Caco-2 (cell line): ENCODE measurements at regions of chr17 and their contacts with region 1.

Region 1: DNA sequence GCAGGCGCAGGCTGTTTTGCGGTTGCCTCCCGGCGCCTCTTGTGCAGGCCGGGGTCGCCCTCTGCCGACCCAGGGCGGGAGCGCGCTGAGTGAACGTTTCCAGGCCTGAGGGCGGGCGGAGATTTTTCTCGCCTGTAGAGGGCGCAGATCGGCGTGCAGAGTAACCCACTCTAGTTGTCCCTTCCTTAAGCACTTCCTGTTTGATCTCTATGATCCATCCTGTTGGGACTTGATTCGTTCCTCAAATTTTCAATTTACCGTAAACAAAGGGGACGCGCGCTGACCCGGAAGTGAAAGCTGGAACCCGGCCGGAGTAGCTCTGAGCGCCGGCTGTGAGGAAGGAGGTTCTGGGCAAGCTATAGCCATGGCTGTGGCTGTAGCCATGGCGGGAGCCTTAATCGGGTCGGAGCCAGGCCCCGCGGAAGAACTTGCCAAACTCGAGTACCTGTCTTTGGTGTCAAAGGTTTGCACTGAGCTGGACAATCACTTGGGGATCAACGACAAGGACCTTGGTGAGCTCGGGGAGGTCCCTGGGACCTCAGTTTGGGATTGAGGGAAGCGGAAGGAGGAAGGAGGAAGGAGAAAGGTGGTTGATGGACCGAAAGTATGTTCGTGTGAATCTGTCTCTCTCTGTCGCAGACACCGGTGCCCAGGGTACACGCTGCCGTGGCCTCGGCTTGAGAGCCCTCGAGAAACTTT is at the start of gene DHX8:
- DNase-seq: peak; percentile 97 to 98
- H3K4me3 ChIP-seq: peak within 1 kb of the TSS; percentile 64
- H3K4me3 Mint-ChIP-seq: peak within 1 kb of the TSS; percentile 98
- H3K27ac Mint-ChIP-seq: peak within 1 kb of the TSS; percentile 99
- H3K4me1 ChIP-seq: peaks cover 29% of the 10 kb centered on the region
- H3K4me1 Mint-ChIP-seq: peaks cover 13% of the 10 kb centered on the region
- H3K27me3 ChIP-seq: no peaks in the 10 kb centered on the region
- H3K27me3 Mint-ChIP-seq: no peaks in the 10 kb centered on the region
- CTCF ChIP-seq: peak; percentile 100
- total RNA-seq, gene DHX8: 56.3 and 66.8 TPM in 2 replicates

Region 2: GRCh38 chr17:42953669-42954068 is 530.2 kb before region 1 on chr17:
- CTCF ChIA-PET with region 1: no interaction called
- POLR2A ChIA-PET with region 1: interaction called, 13 read pairs
- intact Hi-C with region 1: no loop called
- DNase-seq: no peak
- H3K4me3 ChIP-seq: no peak overlapping the region
- H3K4me3 Mint-ChIP-seq: no peak overlapping the region
- H3K27ac Mint-ChIP-seq: no peak overlapping the region
- H3K4me1 ChIP-seq: no peaks in the 10 kb centered on the region
- H3K4me1 Mint-ChIP-seq: no peaks in the 10 kb centered on the region
- H3K27me3 ChIP-seq: no peaks in the 10 kb centered on the region
- H3K27me3 Mint-ChIP-seq: no peaks in the 10 kb centered on the region
- CTCF ChIP-seq: no peak

Region 3: GRCh38 chr17:43155666-43156065 is 328.2 kb before region 1 on chr17:
- CTCF ChIA-PET with region 1: no interaction called
- POLR2A ChIA-PET with region 1: no interaction called
- intact Hi-C with region 1: no loop called
- DNase-seq: peak; percentile 55 to 61
- H3K4me3 ChIP-seq: no peak overlapping the region
- H3K4me3 Mint-ChIP-seq: no peak overlapping the region
- H3K27ac Mint-ChIP-seq: no peak overlapping the region
- H3K4me1 ChIP-seq: peaks cover 18% of the 10 kb centered on the region
- H3K4me1 Mint-ChIP-seq: peaks cover 8% of the 10 kb centered on the region
- H3K27me3 ChIP-seq: no peaks in the 10 kb centered on the region
- H3K27me3 Mint-ChIP-seq: no peaks in the 10 kb centered on the region
- CTCF ChIP-seq: no peak

Region 4: GRCh38 chr17:43367737-43368242 is 116.0 kb before region 1 on chr17:
- CTCF ChIA-PET with region 1: interaction called, 39 read pairs
- POLR2A ChIA-PET with region 1: interaction called, 58 read pairs
- intact Hi-C with region 1: loop called (anchors 1 kb)
- DNase-seq: peak; percentile 79 to 80
- H3K4me3 ChIP-seq: peak overlapping the region; percentile 15; the same call in 1 of the 2 replicates
- H3K4me3 Mint-ChIP-seq: peak overlapping the region; percentile 90
- H3K27ac Mint-ChIP-seq: peak overlapping the region; percentile 100
- H3K4me1 ChIP-seq: peaks cover 31% of the 10 kb centered on the region
- H3K4me1 Mint-ChIP-seq: peaks cover 43% of the 10 kb centered on the region
- H3K27me3 ChIP-seq: no peaks in the 10 kb centered on the region
- H3K27me3 Mint-ChIP-seq: peaks cover 4% of the 10 kb centered on the region
- CTCF ChIP-seq: no peak

Region 5: GRCh38 chr17:43393944-43394482 is 89.8 kb before region 1 on chr17:
- CTCF ChIA-PET with region 1: interaction called, 211 read pairs
- POLR2A ChIA-PET with region 1: interaction called, 34 read pairs
- intact Hi-C with region 1: loop called (anchors 1 kb)
- DNase-seq: peak; percentile 87 to 91
- H3K4me3 ChIP-seq: no peak overlapping the region
- H3K4me3 Mint-ChIP-seq: no peak overlapping the region
- H3K27ac Mint-ChIP-seq: peak overlapping the region; percentile 53
- H3K4me1 ChIP-seq: peaks cover 5% of the 10 kb centered on the region; the same call in 1 of the 2 replicates
- H3K4me1 Mint-ChIP-seq: peaks cover 5% of the 10 kb centered on the region
- H3K27me3 ChIP-seq: no peaks in the 10 kb centered on the region
- H3K27me3 Mint-ChIP-seq: no peaks in the 10 kb centered on the region
- CTCF ChIP-seq: peak; percentile 89 to 96

Region 6: GRCh38 chr17:43431714-43432523 is 51.9 kb before region 1 on chr17:
- CTCF ChIA-PET with region 1: interaction called, 13 read pairs
- POLR2A ChIA-PET with region 1: no interaction called
- intact Hi-C with region 1: no loop called
- DNase-seq: no peak
- H3K4me3 ChIP-seq: no peak overlapping the region
- H3K4me3 Mint-ChIP-seq: no peak overlapping the region
- H3K27ac Mint-ChIP-seq: peak overlapping the region; percentile 16
- H3K4me1 ChIP-seq: peaks cover 42% of the 10 kb centered on the region
- H3K4me1 Mint-ChIP-seq: peaks cover 45% of the 10 kb centered on the region
- H3K27me3 ChIP-seq: no peaks in the 10 kb centered on the region
- H3K27me3 Mint-ChIP-seq: no peaks in the 10 kb centered on the region
- CTCF ChIP-seq: no peak

Region 7: GRCh38 chr17:43467981-43468581 is 15.7 kb before region 1 on chr17:
- CTCF ChIA-PET with region 1: interaction called, 26 read pairs
- POLR2A ChIA-PET with region 1: interaction called, 13 read pairs
- intact Hi-C with region 1: loop called (anchors 1 kb)
- DNase-seq: no peak
- H3K4me3 ChIP-seq: no peak overlapping the region
- H3K4me3 Mint-ChIP-seq: no peak overlapping the region
- H3K27ac Mint-ChIP-seq: peak overlapping the region; percentile 39
- H3K4me1 ChIP-seq: peaks cover 27% of the 10 kb centered on the region
- H3K4me1 Mint-ChIP-seq: peaks cover 20% of the 10 kb centered on the region
- H3K27me3 ChIP-seq: no peaks in the 10 kb centered on the region
- H3K27me3 Mint-ChIP-seq: no peaks in the 10 kb centered on the region
- CTCF ChIP-seq: no peak